PC-3 (cell line): ENCODE measurements at regions of chr17 and their contacts with region 1.

Region 1: DNA sequence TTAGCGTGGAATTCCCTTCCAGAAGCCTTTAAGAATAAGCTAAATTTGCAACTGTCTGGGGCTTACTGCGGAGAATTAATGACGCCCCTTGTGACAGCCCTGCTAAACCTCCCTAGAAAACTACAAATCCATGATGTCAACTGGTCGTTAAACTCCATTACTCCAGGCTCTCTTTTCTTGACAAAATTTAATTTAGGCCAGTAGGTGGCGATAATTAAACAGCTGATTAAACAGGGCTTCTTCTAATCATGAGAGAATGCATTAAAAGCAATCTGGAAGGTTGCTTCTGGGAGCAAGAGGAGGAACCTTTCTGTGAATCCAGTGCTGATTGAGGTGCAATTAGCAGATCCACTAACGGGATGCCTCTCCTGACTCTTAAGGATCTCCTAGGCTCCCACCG is 8.1 kb upstream of the NLRP1 start:
- DNase-seq: peak; percentile 79
- ATAC-seq: 0 out of 2 replicates have a peak, but pooled peaks have one; percentile 35
- H3K4me3 ChIP-seq: no peak overlapping the region
- H3K27ac ChIP-seq: no peak overlapping the region
- H3K4me1 ChIP-seq: 0 out of 2 replicates have a peak, but pooled peaks cover under 1% of the 10 kb centered on the region
- H3K27me3 ChIP-seq: no peaks in the 10 kb centered on the region
- CTCF ChIP-seq: peak; percentile 70

Region 2: DNA sequence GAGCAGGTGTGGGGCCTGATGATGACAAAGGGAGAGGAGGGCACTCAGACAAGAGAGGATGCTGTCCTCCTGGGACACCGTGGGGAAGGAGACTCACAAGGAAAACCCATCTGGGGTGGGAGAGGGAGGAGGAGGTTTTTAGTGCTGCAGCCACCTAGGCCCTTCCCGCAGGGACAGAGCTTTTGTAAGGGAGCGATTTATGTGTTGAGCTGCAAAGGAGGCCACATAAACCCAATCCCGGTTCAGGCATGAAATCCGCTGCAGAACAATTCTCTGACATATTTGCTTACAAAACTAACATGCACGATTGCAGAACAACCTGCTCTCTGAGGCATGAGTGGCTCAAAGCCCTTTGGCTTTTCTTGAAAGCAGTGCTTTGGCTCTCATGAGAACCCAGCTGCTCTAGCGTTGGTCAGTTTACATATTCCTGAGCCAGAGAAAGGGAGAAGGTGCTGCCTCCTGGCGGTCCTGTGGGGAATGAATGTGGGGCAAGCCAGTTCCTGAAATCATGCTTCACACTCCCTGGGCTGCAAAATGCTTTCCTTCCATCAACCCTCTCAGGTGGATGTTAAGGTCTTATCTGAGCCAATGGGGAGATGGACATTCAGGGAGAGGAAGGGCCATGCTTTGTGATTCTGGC is 114.3 kb after region 1 on chr17:
- CTCF ChIA-PET with region 1: no interaction called
- POLR2A ChIA-PET with region 1: no interaction called
- intact Hi-C with region 1: loop called (anchors 2 kb)
- DNase-seq: peak; percentile 58
- ATAC-seq: no peak
- H3K4me3 ChIP-seq: no peak overlapping the region
- H3K27ac ChIP-seq: no peak overlapping the region
- H3K4me1 ChIP-seq: peaks cover 5% of the 10 kb centered on the region
- H3K27me3 ChIP-seq: no peaks in the 10 kb centered on the region
- CTCF ChIP-seq: peak; percentile 74